Sigmoid colon (tissue), 7 donors: ENCODE measurements at regions of chr3 and their contacts with region 1.

Region 1: DNA sequence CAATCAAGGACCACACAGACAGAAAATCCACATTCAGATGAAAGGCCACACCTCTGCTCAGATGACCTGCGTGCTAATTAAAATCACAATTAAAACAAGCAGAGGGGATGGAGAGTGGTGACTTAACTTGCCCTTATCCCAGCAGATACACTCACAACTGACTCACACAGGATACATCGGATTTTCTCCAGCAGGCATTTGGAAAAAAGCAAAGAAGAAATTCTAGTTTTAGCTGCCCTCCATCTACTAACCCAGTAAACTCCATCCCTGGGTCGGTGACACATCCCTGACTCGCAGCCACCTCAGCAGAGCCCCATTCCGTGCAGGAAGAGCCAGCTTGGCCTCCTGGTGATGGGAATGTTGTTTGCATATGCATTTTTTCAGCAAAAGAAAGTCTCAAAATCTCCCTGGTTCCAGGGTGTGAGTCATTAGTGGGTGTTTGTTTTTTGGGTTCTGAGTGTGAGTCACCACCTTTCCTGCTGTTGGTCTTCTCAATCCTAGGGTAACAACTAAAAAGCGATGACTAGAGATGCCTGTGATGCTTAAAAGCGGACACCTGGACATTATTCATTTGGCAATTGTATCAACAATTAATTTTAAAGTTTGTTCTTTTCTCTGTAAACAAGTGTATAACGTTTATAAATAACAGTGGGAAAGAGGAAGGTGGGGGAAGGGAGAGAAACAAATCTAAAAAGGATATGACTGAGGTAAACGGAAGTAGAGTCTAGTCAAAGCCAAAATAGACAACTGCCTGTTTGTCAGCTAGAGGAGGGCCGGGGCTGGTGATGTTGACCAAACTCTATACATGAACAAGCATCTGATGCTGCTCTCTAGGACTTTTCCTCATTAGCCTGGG is 49.8 kb upstream of the SLC4A7 start:
- DNase-seq: peak; percentile 85
- H3K4me3 ChIP-seq: no peak overlapping the region
- H3K27ac ChIP-seq: peak overlapping the region; percentile 65 to 83 (median 76)
- H3K4me1 ChIP-seq: peaks cover 0 to 52% (median 33%) of the 10 kb centered on the region in 4 donors
- H3K27me3 ChIP-seq: no peaks in the 10 kb centered on the region
- CTCF ChIP-seq: peak; percentile 20 to 45 (median 26)
- EP300 ChIP-seq: no peak
- POLR2A ChIP-seq: no peak

Region 2: GRCh38 chr3:27165321-27165721 is 368.6 kb before region 1 on chr3:
- intact Hi-C with region 1: no loop called
- DNase-seq: no peak
- H3K4me3 ChIP-seq: no peak overlapping the region
- H3K27ac ChIP-seq: peak overlapping the region in 3 of 4 donors; percentile 11 to 47 (median 36)
- H3K4me1 ChIP-seq: no peaks in the 10 kb centered on the region
- H3K27me3 ChIP-seq: no peaks in the 10 kb centered on the region
- CTCF ChIP-seq: no peak
- EP300 ChIP-seq: no peak
- POLR2A ChIP-seq: no peak

Region 3: GRCh38 chr3:27568393-27568792 is 34.4 kb after region 1 on chr3:
- intact Hi-C with region 1: loop called (anchors 5 kb)
- DNase-seq: peak; percentile 95
- H3K4me3 ChIP-seq: peak overlapping the region in 1 of 4 donors; percentile 3
- H3K27ac ChIP-seq: peak overlapping the region in 3 of 4 donors; percentile 74 to 83 (median 83)
- H3K4me1 ChIP-seq: peaks cover 0 to 46% (median 42%) of the 10 kb centered on the region in 4 donors
- H3K27me3 ChIP-seq: no peaks in the 10 kb centered on the region
- CTCF ChIP-seq: no peak
- EP300 ChIP-seq: peak; percentile 64 to 83 (median 76)
- POLR2A ChIP-seq: no peak